PC-9 (cell line): ENCODE measurements at regions of chr10 and their contacts with region 1.

Region 1: DNA sequence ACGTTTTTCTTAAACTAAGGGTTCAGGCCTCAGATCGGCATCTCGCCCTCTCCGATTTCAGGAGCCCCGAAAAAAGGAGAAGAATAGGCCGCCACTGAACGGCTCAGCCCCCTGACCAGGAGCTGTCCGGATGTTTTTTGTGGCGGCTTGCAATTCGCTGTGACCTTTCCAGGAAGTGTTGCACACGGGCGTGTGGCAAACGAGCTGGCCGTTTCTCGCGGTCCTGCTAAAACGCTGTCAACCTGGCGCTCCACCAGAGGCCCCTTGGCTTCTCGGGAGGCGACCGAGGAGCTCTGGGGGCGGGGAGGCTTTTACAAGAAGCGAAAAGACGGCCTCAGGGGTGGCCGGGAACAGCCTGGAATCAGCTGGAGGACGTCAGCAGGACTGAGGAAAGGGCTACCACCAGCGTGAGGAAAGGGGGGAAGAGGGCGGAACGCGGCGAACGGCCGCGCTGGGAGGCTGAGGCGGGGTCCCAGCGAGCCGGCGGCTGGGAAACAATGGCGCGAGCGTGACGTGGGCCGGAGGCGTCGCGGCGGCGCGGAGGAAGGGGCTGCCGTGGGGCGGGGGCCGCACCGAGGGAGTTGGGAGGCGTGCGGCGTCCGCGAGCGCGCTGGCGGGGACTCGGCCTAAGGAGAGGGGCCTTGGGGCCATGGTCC is 493 bp downstream of the NT5C2 start:
- DNase-seq: peak; percentile 43 to 65
- H3K4me3 ChIP-seq: peak overlapping the region; percentile 92
- H3K27ac ChIP-seq: peak overlapping the region; percentile 84
- H3K4me1 ChIP-seq: peaks cover 55% of the 10 kb centered on the region
- H3K27me3 ChIP-seq: no peaks in the 10 kb centered on the region
- CTCF ChIP-seq: no peak

Region 2: GRCh38 chr10:103102195-103102594 is 90.4 kb before region 1 on chr10:
- CTCF ChIA-PET with region 1: interaction called, 10 read pairs
- POLR2A ChIA-PET with region 1: no interaction called
- intact Hi-C with region 1: no loop called
- DNase-seq: no peak
- H3K4me3 ChIP-seq: no peak overlapping the region
- H3K27ac ChIP-seq: no peak overlapping the region
- H3K4me1 ChIP-seq: 0 out of 2 replicates have a peak, but pooled peaks cover 7% of the 10 kb centered on the region
- H3K27me3 ChIP-seq: no peaks in the 10 kb centered on the region
- CTCF ChIP-seq: no peak

Region 3: DNA sequence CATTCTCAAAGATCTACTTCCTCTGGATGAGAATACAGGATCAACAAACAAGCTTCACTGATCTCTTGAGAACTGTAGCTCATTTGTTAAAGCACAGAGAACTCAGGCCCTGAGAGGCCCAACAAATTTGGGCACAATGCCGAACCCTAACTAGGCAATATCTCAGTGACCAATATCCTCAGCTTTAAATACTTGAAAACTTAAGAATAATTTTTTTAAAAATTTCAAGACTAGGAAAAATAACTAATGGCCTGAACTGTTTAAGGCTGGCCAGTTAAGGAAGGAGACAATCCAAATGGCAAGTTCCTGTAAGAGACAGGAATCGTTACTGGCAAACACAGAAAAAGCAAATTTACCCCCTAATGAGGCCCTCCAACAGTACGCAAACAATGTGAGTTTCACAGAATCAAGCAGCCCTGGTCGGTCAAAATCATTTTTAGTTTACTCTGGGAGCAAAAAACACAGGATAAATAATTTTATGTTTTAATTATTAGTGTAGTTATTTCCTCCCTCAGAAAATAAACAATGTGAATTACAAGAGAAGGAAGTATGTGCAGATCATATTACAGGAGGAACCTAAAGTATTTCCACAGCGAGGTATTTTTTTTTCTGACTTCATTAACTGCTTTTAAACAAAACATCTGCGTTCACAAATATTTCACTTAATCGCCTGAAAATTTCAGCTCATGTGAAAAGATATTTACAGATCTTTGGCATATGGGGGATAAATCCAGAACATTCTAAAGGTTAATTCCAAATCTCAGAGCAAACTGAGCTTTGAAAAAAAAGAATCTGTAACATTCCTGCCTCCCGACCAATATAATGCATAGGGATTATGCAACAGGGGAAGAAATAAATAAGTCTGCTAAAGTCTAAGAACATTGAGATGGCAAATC is 39.0 kb before region 1 on chr10:
- CTCF ChIA-PET with region 1: interaction called, 4 read pairs
- POLR2A ChIA-PET with region 1: interaction called, 11 read pairs
- intact Hi-C with region 1: no loop called
- DNase-seq: peak in 1 of 2 experiments; percentile 66
- H3K4me3 ChIP-seq: peak overlapping the region; percentile 24; the same call in 1 of the 2 replicates
- H3K27ac ChIP-seq: peak overlapping the region; percentile 78
- H3K4me1 ChIP-seq: peaks cover 47% of the 10 kb centered on the region
- H3K27me3 ChIP-seq: no peaks in the 10 kb centered on the region
- CTCF ChIP-seq: no peak

Region 4: GRCh38 chr10:103231047-103231551 is 38.5 kb after region 1 on chr10:
- CTCF ChIA-PET with region 1: no interaction called
- POLR2A ChIA-PET with region 1: interaction called, 15 read pairs
- intact Hi-C with region 1: loop called (anchors 2 kb)
- DNase-seq: peak; percentile 68 to 94
- H3K4me3 ChIP-seq: peak overlapping the region; percentile 4; the same call in 1 of the 2 replicates
- H3K27ac ChIP-seq: peak overlapping the region; percentile 100
- H3K4me1 ChIP-seq: peaks cover 70% of the 10 kb centered on the region
- H3K27me3 ChIP-seq: no peaks in the 10 kb centered on the region
- CTCF ChIP-seq: no peak

Region 5: DNA sequence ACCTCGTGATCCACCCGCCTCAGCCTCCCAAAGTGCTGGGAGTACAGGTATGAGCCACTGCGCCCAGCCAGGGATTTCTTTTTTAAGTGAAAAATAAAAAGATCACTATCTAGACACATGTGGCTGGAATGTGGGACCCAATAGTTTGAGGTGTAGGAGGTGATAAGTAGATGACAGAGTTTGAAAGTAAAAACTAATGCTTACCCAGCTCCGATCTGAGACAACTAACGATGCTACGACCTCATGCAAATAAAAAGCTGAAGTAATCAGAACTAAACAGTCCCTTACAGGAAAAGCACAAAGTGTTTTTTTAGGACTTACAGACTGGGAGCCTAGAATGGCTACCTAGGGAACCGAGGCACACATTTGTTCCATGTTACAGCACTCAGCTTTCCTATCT is 135.3 kb after region 1 on chr10:
- CTCF ChIA-PET with region 1: no interaction called
- POLR2A ChIA-PET with region 1: interaction called, 10 read pairs
- intact Hi-C with region 1: no loop called
- DNase-seq: no peak
- H3K4me3 ChIP-seq: no peak overlapping the region
- H3K27ac ChIP-seq: no peak overlapping the region
- H3K4me1 ChIP-seq: no peaks in the 10 kb centered on the region
- H3K27me3 ChIP-seq: no peaks in the 10 kb centered on the region
- CTCF ChIP-seq: no peak